ENCODE measurements at regions of chr15 and their contacts with region 1.

Region 1: GRCh38 chr15:31265871-31266711 is 60.5 kb upstream of the KLF13 start:
- DNase-seq: peak; percentile 58 to 90 (median 76)
- ATAC-seq: peak; percentile 86
- H3K4me3 ChIP-seq: no peak overlapping the region
- H3K4me3 Mint-ChIP-seq: peak overlapping the region; percentile 71
- H3K27ac ChIP-seq: peak overlapping the region; percentile 79 to 85
- H3K27ac Mint-ChIP-seq: peak overlapping the region; percentile 98
- H3K4me1 ChIP-seq: peaks cover 97% of the 10 kb centered on the region
- H3K4me1 Mint-ChIP-seq: peaks cover 98% of the 10 kb centered on the region
- H3K27me3 ChIP-seq: no peaks in the 10 kb centered on the region
- H3K27me3 Mint-ChIP-seq: no peaks in the 10 kb centered on the region
- CTCF ChIP-seq: no peak

Region 2: DNA sequence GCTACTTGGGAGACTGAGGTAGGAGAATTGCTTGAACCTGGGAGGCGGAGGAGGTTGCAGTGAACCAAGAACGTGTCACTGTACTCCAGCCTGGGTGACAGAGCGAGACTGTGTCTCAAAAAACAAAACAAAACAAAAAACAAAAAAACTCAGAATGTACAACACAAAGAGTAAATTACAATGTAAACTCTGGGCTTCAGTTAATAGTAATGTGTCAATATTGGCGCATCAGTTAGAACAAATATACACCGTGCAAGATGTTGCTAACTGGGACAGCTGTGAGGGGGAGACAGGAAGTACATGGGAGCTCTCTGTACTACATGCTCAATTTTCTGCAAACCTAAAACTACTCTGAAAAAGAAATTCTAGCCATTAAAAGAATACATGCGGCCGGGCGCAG is 141.0 kb before region 1 on chr15:
- CTCF ChIA-PET with region 1: no interaction called
- POLR2A ChIA-PET with region 1: no interaction called
- intact Hi-C with region 1: no loop called
- DNase-seq: no peak
- ATAC-seq: no peak
- H3K4me3 ChIP-seq: no peak overlapping the region
- H3K4me3 Mint-ChIP-seq: no peak overlapping the region
- H3K27ac ChIP-seq: no peak overlapping the region
- H3K27ac Mint-ChIP-seq: no peak overlapping the region
- H3K4me1 ChIP-seq: peaks cover 5% of the 10 kb centered on the region
- H3K4me1 Mint-ChIP-seq: no peaks in the 10 kb centered on the region
- H3K27me3 ChIP-seq: no peaks in the 10 kb centered on the region
- H3K27me3 Mint-ChIP-seq: no peaks in the 10 kb centered on the region
- CTCF ChIP-seq: no peak

Region 3: DNA sequence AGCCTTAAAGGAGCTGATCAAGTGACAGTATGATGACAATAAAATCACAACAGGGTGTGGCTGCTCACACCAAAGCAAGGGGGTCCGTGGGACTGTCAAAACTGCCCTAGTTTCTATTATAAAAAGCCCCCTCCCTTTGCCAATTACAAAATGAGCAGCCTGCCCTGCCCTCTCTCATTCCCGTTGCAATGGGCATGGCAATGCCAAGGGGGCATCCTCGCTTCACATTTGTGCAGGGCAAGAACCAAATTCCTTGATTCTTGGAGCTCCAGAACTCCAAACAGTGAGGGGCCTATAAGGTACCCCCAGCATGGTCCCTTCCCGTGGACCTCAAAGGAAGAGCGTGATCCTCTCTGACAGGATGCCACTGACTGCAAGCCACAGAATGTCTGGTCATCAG is 59.7 kb before region 1 on chr15:
- CTCF ChIA-PET with region 1: no interaction called
- POLR2A ChIA-PET with region 1: interaction called, 12 read pairs
- intact Hi-C with region 1: no loop called
- DNase-seq: no peak
- ATAC-seq: no peak
- H3K4me3 ChIP-seq: no peak overlapping the region
- H3K4me3 Mint-ChIP-seq: no peak overlapping the region
- H3K27ac ChIP-seq: no peak overlapping the region
- H3K27ac Mint-ChIP-seq: no peak overlapping the region
- H3K4me1 ChIP-seq: peaks cover 41% of the 10 kb centered on the region
- H3K4me1 Mint-ChIP-seq: peaks cover 39% of the 10 kb centered on the region
- H3K27me3 ChIP-seq: no peaks in the 10 kb centered on the region
- H3K27me3 Mint-ChIP-seq: no peaks in the 10 kb centered on the region
- CTCF ChIP-seq: no peak

Region 4: DNA sequence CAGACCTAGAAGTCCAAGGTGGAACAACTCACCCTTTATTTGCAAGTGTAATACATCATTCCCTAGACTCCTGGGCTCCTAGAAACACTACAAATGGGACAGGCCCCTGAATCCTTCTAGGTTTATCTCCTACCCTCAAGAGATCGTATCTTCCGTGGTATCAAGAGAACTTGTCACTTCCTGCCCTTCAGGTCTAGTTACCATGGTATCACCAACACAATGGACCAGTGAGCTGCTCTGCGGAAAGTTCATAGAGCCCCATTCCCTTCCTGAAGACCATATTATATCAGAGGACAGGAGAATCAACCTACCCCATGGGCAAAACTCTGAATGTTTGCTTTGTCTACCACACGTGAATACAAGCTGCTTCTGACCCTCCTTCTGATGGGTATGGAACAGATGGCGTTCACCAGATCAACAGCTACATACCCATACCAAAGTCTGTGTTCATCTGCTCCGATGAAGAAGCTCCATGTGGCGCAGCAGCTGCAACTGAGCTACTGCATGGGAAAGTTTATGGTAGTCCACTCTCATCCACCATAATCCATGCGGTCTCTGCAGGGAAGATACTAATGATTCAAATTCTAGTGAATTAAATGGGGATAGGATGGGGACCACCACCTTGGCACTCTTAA is 24.1 kb before region 1 on chr15:
- CTCF ChIA-PET with region 1: interaction called, 3 read pairs
- POLR2A ChIA-PET with region 1: interaction called, 12 read pairs
- intact Hi-C with region 1: loop called in 1 of 2 experiments (anchors 2 kb)
- DNase-seq: peak in 5 of 14 experiments; percentile 13 to 90 (median 77)
- ATAC-seq: peak; percentile 95
- H3K4me3 ChIP-seq: no peak overlapping the region
- H3K4me3 Mint-ChIP-seq: peak overlapping the region; percentile 32
- H3K27ac ChIP-seq: peak overlapping the region in 1 of 2 donors; percentile 64
- H3K27ac Mint-ChIP-seq: peak overlapping the region; percentile 75
- H3K4me1 ChIP-seq: peaks cover 32% of the 10 kb centered on the region
- H3K4me1 Mint-ChIP-seq: peaks cover 49% of the 10 kb centered on the region
- H3K27me3 ChIP-seq: no peaks in the 10 kb centered on the region
- H3K27me3 Mint-ChIP-seq: no peaks in the 10 kb centered on the region
- CTCF ChIP-seq: no peak

Region 5: GRCh38 chr15:31302778-31303725 is 37.0 kb after region 1 on chr15:
- CTCF ChIA-PET with region 1: no interaction called
- POLR2A ChIA-PET with region 1: interaction called, 3 read pairs
- intact Hi-C with region 1: loop called (anchors 1 to 5 kb)
- DNase-seq: peak in 4 of 14 experiments; percentile 16 to 54 (median 39)
- ATAC-seq: peak; percentile 49
- H3K4me3 ChIP-seq: no peak overlapping the region
- H3K4me3 Mint-ChIP-seq: no peak overlapping the region
- H3K27ac ChIP-seq: no peak overlapping the region
- H3K27ac Mint-ChIP-seq: peak overlapping the region; percentile 58
- H3K4me1 ChIP-seq: peaks cover 43% of the 10 kb centered on the region
- H3K4me1 Mint-ChIP-seq: peaks cover 46% of the 10 kb centered on the region
- H3K27me3 ChIP-seq: no peaks in the 10 kb centered on the region
- H3K27me3 Mint-ChIP-seq: peaks cover 5% of the 10 kb centered on the region
- CTCF ChIP-seq: no peak

Region 6: DNA sequence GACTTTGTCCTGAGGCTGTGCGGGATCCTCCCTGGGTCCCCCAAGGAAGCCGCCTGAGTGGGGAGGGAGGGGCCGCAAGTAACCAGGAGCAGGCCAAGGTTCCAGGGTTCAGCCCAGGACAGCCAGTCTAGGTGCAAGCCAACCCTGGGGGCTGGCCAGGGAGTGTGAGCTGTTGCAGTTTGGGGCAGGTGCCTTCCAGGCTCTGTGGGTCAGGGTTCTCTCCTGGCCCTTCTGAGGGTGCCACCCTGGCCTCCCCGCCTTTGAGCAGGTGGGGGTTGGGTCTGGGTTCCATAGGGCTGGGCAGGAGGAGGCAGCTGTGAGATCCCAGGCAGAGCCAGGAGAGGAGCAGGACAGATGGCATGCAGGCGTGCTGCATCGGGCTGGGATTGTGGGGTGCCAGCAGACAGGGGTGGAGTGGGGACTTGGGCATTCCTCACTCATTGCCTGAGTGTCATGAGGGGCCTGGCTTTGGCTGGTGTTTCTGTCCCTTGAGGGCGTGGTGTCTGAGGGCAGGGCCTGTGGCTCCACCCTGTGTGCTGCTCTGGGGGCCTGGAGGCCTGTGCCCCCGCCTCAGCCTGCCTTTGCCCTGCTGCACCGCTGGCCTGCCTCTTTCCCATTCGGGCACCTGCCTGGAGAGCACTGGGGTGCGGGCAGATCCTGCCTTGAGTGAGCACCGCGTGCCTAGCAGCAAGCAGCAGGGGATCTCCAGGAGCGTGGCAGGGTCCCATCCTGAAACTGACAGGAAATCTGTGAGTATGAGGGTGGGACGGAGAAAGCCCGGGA is 78.9 kb after region 1 on chr15:
- CTCF ChIA-PET with region 1: no interaction called
- POLR2A ChIA-PET with region 1: interaction called, 10 read pairs
- intact Hi-C with region 1: no loop called
- DNase-seq: peak in 3 of 14 experiments; percentile 46 to 50 (median 47)
- ATAC-seq: no peak
- H3K4me3 ChIP-seq: peak overlapping the region; percentile 47
- H3K4me3 Mint-ChIP-seq: peak overlapping the region; percentile 90
- H3K27ac ChIP-seq: peak overlapping the region; percentile 81 to 86
- H3K27ac Mint-ChIP-seq: peak overlapping the region; percentile 90
- H3K4me1 ChIP-seq: peaks cover 100% of the 10 kb centered on the region
- H3K4me1 Mint-ChIP-seq: peaks cover 100% of the 10 kb centered on the region
- H3K27me3 ChIP-seq: no peaks in the 10 kb centered on the region
- H3K27me3 Mint-ChIP-seq: no peaks in the 10 kb centered on the region
- CTCF ChIP-seq: no peak

Measured in CD4-positive, alpha-beta T cell (primary cell).